ENCODE measurements at regions of chr12 and their contacts with region 1.

Region 1: GRCh38 chr12:9464408-9464807 is 143.3 kb downstream of the KLRB1 start:
- DNase-seq: no peak
- ATAC-seq: no peak
- H3K4me3 Mint-ChIP-seq: no peak overlapping the region
- H3K27ac Mint-ChIP-seq: no peak overlapping the region
- H3K4me1 Mint-ChIP-seq: peaks cover 2% of the 10 kb centered on the region; the same call in 1 of the 2 replicates
- H3K27me3 Mint-ChIP-seq: no peaks in the 10 kb centered on the region
- CTCF ChIP-seq: no peak

Region 2: GRCh38 chr12:9325471-9325870 is 138.9 kb before region 1 on chr12:
- CTCF ChIA-PET with region 1: interaction called, 35 read pairs
- POLR2A ChIA-PET with region 1: no interaction called
- DNase-seq: no peak
- ATAC-seq: no peak
- H3K4me3 Mint-ChIP-seq: no peak overlapping the region
- H3K27ac Mint-ChIP-seq: no peak overlapping the region
- H3K4me1 Mint-ChIP-seq: no peaks in the 10 kb centered on the region
- H3K27me3 Mint-ChIP-seq: no peaks in the 10 kb centered on the region
- CTCF ChIP-seq: no peak

Region 3: GRCh38 chr12:9331218-9331626 is 133.2 kb before region 1 on chr12:
- CTCF ChIA-PET with region 1: interaction called, 35 read pairs
- POLR2A ChIA-PET with region 1: no interaction called
- DNase-seq: peak; percentile 83
- ATAC-seq: peak; percentile 92
- H3K4me3 Mint-ChIP-seq: no peak overlapping the region
- H3K27ac Mint-ChIP-seq: peak overlapping the region; percentile 81
- H3K4me1 Mint-ChIP-seq: peaks cover 3% of the 10 kb centered on the region
- H3K27me3 Mint-ChIP-seq: no peaks in the 10 kb centered on the region; the same call in 1 of the 2 replicates
- CTCF ChIP-seq: peak; percentile 99

Region 4: GRCh38 chr12:9372202-9372601 is 92.2 kb before region 1 on chr12:
- CTCF ChIA-PET with region 1: interaction called, 48 read pairs
- POLR2A ChIA-PET with region 1: no interaction called
- DNase-seq: no peak
- ATAC-seq: peak; percentile 84
- H3K4me3 Mint-ChIP-seq: no peak overlapping the region
- H3K27ac Mint-ChIP-seq: no peak overlapping the region
- H3K4me1 Mint-ChIP-seq: peaks cover 2% of the 10 kb centered on the region
- H3K27me3 Mint-ChIP-seq: no peaks in the 10 kb centered on the region
- CTCF ChIP-seq: no peak

Region 5: DNA sequence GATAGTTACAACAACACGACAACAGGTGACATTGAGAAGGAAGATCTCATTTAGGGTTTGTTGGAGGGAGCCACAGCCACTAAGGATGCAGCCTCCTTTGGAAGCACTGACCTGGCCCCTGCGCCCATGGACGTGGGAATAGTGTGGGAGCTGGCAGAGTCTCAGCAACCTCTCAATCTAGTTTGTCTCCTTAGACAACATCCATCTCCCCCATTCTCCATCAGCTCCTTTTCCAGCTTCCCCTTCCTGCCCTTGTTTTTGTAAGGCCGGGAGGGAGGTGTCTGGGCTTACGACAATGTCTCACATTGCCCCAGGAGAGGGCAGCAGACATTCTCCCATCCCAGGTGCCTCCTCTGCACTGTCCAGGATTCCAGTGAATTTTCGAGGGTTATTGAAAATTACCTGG is 86.0 kb before region 1 on chr12:
- CTCF ChIA-PET with region 1: interaction called, 48 read pairs
- POLR2A ChIA-PET with region 1: no interaction called
- DNase-seq: peak; percentile 41
- ATAC-seq: peak; percentile 98
- H3K4me3 Mint-ChIP-seq: no peak overlapping the region
- H3K27ac Mint-ChIP-seq: no peak overlapping the region
- H3K4me1 Mint-ChIP-seq: peaks cover 6% of the 10 kb centered on the region; the same call in 1 of the 2 replicates
- H3K27me3 Mint-ChIP-seq: no peaks in the 10 kb centered on the region
- CTCF ChIP-seq: no peak

Region 6: DNA sequence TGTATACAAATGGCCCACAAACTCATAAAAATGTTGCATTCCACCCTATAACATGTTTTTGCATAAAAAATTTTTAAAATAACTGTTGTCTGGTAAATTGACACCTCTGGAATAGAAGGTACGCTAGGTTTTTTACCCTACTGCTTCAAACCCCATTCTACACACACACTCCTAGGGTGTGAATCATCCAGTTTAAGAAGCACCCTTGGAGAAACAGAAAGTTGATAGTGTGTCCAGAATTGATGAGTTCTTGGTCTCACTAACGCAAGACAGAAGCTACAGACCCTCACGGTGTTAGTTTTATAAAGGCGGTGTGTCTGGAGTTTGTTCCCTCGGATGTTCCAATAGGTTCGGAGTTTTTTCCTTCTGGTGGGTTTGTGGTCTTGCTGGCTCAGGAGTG is 15.2 kb before region 1 on chr12:
- CTCF ChIA-PET with region 1: interaction called, 18 read pairs
- POLR2A ChIA-PET with region 1: no interaction called
- DNase-seq: no peak
- ATAC-seq: no peak
- H3K4me3 Mint-ChIP-seq: peak overlapping the region; percentile 97
- H3K27ac Mint-ChIP-seq: no peak overlapping the region; the same call in 1 of the 2 replicates
- H3K4me1 Mint-ChIP-seq: peaks cover 10% of the 10 kb centered on the region
- H3K27me3 Mint-ChIP-seq: no peaks in the 10 kb centered on the region
- CTCF ChIP-seq: no peak

Region 7: DNA sequence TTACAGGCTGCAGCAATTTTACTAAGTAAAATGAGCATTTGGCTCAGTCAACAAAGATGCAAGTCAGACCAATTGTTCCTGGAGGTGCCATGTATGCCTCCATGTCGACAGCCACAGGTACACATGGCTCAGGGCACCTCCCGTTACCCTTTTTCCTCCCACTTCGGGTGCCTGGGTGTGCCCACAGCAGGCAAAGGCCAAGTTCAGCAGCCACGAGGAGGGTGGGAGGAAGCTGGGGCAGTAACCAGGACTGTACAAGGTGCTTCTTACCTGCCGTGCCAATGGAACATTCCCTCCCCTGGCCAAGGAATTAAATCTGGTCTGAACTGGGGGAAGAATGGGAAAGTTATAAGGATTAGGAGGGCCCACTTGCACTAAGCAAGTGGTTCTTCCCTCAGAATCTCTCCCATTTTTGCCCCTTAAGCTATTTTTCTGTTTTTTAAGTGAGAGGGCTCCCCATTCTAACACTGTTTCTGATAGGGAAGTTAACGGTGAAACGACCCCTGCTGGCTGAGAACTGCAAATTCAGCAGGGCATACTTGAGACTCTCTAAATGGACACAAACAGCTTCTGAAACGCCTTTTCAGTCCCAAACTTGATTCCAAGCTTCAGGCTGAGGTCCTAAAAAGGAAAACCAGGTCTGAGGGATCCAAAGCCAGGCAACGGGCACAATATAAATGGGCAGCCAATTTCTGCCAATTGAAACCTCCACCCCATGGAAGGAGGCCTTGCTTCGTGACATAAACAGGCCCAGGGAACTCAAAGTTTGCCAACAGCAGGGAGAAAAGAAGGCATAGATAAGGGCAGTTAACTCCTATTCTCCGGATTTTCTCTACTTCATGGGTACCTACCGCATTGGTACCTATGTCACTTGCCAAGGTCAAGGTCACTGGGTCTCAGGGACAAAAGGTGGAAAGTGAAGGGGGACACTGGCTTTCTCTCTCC is 243.7 kb after region 1 on chr12:
- CTCF ChIA-PET with region 1: interaction called, 14 read pairs
- POLR2A ChIA-PET with region 1: no interaction called
- DNase-seq: peak; percentile 60
- ATAC-seq: peak; percentile 86
- H3K4me3 Mint-ChIP-seq: no peak overlapping the region
- H3K27ac Mint-ChIP-seq: no peak overlapping the region
- H3K4me1 Mint-ChIP-seq: peaks cover 22% of the 10 kb centered on the region
- H3K27me3 Mint-ChIP-seq: no peaks in the 10 kb centered on the region
- CTCF ChIP-seq: peak; percentile 63

Measured in WTC11 (cell line).